WTC11 (cell line): ENCODE measurements at regions of chr4 and their contacts with region 1.

Region 1: GRCh38 chr4:122716825-122717448 is 15.6 kb upstream of the BBS12 start:
- DNase-seq: peak; percentile 76
- ATAC-seq: peak; percentile 93
- H3K4me3 Mint-ChIP-seq: no peak overlapping the region
- H3K27ac Mint-ChIP-seq: no peak overlapping the region
- H3K4me1 Mint-ChIP-seq: no peaks in the 10 kb centered on the region
- H3K27me3 Mint-ChIP-seq: no peaks in the 10 kb centered on the region
- CTCF ChIP-seq: peak; percentile 63

Region 2: GRCh38 chr4:122489061-122489460 is 227.9 kb before region 1 on chr4:
- CTCF ChIA-PET with region 1: no interaction called
- POLR2A ChIA-PET with region 1: no interaction called
- DNase-seq: no peak
- ATAC-seq: no peak
- H3K4me3 Mint-ChIP-seq: no peak overlapping the region
- H3K27ac Mint-ChIP-seq: no peak overlapping the region
- H3K4me1 Mint-ChIP-seq: no peaks in the 10 kb centered on the region
- H3K27me3 Mint-ChIP-seq: no peaks in the 10 kb centered on the region; the same call in 1 of the 2 replicates
- CTCF ChIP-seq: no peak

Region 3: GRCh38 chr4:122602277-122603142 is 114.4 kb before region 1 on chr4:
- CTCF ChIA-PET with region 1: interaction called, 44 read pairs
- POLR2A ChIA-PET with region 1: no interaction called
- DNase-seq: no peak
- ATAC-seq: peak; percentile 66
- H3K4me3 Mint-ChIP-seq: no peak overlapping the region
- H3K27ac Mint-ChIP-seq: no peak overlapping the region
- H3K4me1 Mint-ChIP-seq: peaks cover 32% of the 10 kb centered on the region
- H3K27me3 Mint-ChIP-seq: no peaks in the 10 kb centered on the region
- CTCF ChIP-seq: no peak

Region 4: DNA sequence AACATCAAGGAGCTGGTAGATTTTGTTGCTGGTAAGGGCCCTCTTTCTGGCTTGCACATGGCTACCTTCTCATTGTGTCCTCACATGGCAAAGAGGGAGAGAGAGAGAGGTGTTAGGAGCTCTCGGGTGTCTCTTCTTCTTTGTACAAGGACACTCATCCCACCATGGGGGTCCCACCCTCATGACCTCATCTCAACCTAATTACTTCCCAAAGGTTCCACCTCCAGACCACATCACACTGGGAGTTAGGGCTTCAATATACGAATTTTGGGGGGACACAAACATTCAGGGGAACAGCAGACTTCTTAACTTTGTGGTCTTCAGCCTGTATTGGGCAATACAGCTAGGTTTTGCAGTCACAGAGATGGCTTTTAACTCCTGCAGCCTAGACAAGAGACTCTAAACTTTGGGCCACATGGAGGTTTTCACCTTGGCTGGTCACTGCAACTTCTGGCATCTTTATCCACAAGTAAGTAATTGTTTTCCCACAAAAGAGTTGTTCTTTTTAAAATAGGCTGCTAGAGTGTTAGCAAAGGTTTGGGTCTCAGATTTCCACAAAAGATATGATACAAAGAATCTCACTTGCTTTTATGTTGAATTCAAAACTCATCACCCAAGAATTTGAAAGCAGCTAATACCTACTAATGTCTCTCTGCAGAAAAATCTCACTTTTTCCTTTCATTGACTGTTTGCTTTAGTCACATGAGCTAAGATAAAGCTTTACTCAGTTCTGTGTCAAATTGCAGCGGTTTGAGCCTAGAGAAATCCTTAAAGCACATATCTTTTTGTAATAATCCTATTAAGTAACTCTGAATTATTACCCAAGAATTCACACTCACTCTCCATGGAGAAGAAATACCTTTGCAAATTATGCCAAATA is 24.1 kb before region 1 on chr4:
- CTCF ChIA-PET with region 1: interaction called, 11 read pairs
- POLR2A ChIA-PET with region 1: no interaction called
- DNase-seq: no peak
- ATAC-seq: no peak
- H3K4me3 Mint-ChIP-seq: no peak overlapping the region
- H3K27ac Mint-ChIP-seq: no peak overlapping the region
- H3K4me1 Mint-ChIP-seq: peaks cover 20% of the 10 kb centered on the region
- H3K27me3 Mint-ChIP-seq: peaks cover 8% of the 10 kb centered on the region; the same call in 1 of the 2 replicates
- CTCF ChIP-seq: no peak

Region 5: GRCh38 chr4:122702939-122703338 is 14.0 kb before region 1 on chr4:
- CTCF ChIA-PET with region 1: interaction called, 10 read pairs
- POLR2A ChIA-PET with region 1: no interaction called
- DNase-seq: no peak
- ATAC-seq: no peak
- H3K4me3 Mint-ChIP-seq: no peak overlapping the region
- H3K27ac Mint-ChIP-seq: no peak overlapping the region
- H3K4me1 Mint-ChIP-seq: peaks cover 3% of the 10 kb centered on the region; the same call in 1 of the 2 replicates
- H3K27me3 Mint-ChIP-seq: no peaks in the 10 kb centered on the region; the same call in 1 of the 2 replicates
- CTCF ChIP-seq: no peak

Region 6: DNA sequence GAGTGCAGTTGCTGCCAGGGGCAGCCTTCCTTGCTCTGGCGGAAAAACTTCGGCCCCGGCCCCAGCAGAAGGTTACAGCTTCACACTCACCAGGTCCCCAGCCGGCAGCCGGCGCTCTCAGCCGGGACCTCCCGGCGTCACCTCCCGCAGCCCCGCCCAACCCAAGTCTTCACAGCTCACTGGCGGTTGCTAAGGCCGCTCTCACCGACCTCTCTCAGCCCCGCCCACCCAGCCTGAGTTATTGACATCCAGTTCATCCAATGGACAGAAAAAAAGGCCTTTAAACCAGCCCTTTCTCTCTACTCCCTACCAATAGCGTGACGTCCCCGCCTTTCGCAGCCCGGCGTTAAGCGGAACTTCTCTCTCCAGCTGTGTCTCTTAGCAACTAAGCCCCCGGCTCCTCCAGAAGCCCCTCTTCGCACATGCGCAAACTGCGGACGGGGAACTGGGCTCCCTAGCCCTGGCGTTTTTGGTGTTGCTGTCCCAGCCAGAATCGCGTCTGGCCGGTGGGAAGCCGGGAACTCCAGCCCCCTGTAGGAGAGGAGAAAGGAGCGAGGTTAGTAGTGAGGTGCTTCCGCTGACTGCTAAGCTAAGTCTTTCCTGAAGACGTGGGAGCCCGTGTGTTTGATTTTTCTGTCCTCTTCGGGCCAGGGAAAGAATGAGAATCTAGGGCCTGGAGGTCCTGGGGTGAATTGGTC is 15.5 kb after region 1 on chr4 and contains the start of gene BBS12:
- CTCF ChIA-PET with region 1: interaction called, 23 read pairs
- POLR2A ChIA-PET with region 1: interaction called, 3 read pairs
- DNase-seq: peak; percentile 100
- ATAC-seq: peak; percentile 97
- H3K4me3 Mint-ChIP-seq: peak within 1 kb of the TSS; percentile 90
- H3K27ac Mint-ChIP-seq: peak within 1 kb of the TSS; percentile 96
- H3K4me1 Mint-ChIP-seq: peaks cover 10% of the 10 kb centered on the region
- H3K27me3 Mint-ChIP-seq: no peaks in the 10 kb centered on the region
- CTCF ChIP-seq: no peak
- total RNA-seq, gene BBS12: 2.1 to 2.7 TPM (median 2.3 TPM) in 3 replicates